ENCODE measurements at regions of chr6 and their contacts with region 1.

Region 1: DNA sequence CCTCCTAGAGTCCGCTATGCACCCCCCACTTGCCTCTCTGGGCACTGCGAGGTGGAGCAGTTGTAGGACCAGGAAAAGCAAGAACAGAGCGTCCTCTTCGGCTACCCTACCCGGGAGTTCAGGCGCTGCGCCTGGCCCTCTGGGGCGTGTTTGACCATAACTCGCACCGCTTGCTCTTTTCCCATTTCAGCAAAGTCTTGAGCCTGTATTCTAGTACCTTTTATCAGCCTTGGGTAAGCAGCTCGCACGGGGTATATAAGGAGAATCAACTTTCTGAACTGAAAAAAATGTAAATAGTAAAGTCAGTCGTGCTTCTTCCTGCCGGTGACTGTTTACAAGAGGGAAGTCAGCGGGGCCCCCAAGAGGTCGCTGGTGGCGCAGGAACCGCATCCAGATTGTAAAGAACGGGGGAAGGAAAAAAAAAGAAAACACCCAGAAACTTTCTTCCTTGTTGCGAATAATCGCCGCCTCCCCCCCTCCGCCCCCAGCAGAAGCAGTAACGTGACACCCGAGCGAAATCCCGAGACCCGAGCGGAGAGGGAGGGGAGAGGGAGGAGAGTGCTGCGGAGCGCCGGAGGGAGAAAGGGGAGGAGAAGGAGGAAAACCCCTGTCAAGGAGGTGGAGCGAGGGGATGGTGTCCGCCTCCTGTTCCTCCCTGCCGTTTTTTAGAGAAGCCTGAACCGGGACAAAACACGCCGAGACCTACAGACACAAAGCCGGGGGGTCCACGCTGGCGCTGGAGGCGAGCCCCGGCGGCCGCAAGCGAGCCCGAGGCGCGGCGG is at the start of gene UST:
- DNase-seq: peak; percentile 37
- H3K4me3 Mint-ChIP-seq: peak within 1 kb of the TSS; percentile 90
- H3K27ac Mint-ChIP-seq: peak within 1 kb of the TSS; percentile 46
- H3K4me1 Mint-ChIP-seq: peaks cover 13% of the 10 kb centered on the region
- H3K27me3 Mint-ChIP-seq: peaks cover 78% of the 10 kb centered on the region
- total RNA-seq, gene UST: 0.92 and 1.3 TPM in 2 replicates

Region 2: DNA sequence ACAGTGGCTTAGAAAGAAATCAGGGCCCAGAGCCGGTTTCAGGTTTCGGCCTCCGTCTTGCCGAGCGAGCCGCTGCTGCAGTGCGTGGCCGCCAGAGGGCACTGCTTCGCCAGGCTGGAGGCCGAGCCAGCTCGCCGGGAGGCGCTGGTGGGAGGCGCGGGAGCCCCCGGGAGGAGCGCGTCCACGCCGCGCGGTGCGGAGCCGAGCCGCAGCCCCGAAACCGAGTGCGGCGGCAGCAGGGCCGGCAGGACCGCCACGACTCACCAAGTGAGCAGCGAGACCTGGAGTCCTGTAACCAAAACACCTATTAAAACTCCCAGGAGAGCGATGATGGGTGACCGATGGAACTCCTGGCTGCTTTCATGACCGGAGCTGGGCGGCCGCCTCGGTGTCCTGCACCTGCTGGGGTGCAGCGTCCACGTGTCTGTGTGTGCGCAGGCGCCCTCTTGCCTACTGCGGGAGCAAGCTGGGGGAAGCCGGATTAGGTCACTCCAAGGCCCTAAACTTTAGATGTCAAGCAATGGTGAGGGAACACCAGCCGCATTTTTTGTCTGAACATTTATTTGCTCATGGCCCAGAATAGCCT is 186.6 kb before region 1 on chr6:
- intact Hi-C with region 1: loop called (anchors 10 kb)
- DNase-seq: peak; percentile 48
- H3K4me3 Mint-ChIP-seq: no peak overlapping the region
- H3K27ac Mint-ChIP-seq: no peak overlapping the region
- H3K4me1 Mint-ChIP-seq: peaks cover 8% of the 10 kb centered on the region
- H3K27me3 Mint-ChIP-seq: peaks cover 28% of the 10 kb centered on the region

Region 3: GRCh38 chr6:148770408-148771204 is 24.1 kb after region 1 on chr6:
- intact Hi-C with region 1: no loop called
- DNase-seq: no peak
- H3K4me3 Mint-ChIP-seq: no peak overlapping the region
- H3K27ac Mint-ChIP-seq: no peak overlapping the region
- H3K4me1 Mint-ChIP-seq: peaks cover 10% of the 10 kb centered on the region
- H3K27me3 Mint-ChIP-seq: peaks cover 53% of the 10 kb centered on the region

Region 4: GRCh38 chr6:148780918-148781436 is 34.4 kb after region 1 on chr6:
- intact Hi-C with region 1: loop called (anchors 5 kb)
- DNase-seq: no peak
- H3K4me3 Mint-ChIP-seq: no peak overlapping the region
- H3K27ac Mint-ChIP-seq: peak overlapping the region; percentile 14
- H3K4me1 Mint-ChIP-seq: peaks cover 10% of the 10 kb centered on the region
- H3K27me3 Mint-ChIP-seq: peaks cover 8% of the 10 kb centered on the region

Region 5: GRCh38 chr6:149012040-149012545 is 265.5 kb after region 1 on chr6:
- intact Hi-C with region 1: no loop called
- DNase-seq: no peak
- H3K4me3 Mint-ChIP-seq: no peak overlapping the region
- H3K27ac Mint-ChIP-seq: no peak overlapping the region
- H3K4me1 Mint-ChIP-seq: peaks cover 2% of the 10 kb centered on the region
- H3K27me3 Mint-ChIP-seq: peaks cover 18% of the 10 kb centered on the region

Region 6: GRCh38 chr6:149284904-149285303 is 538.4 kb after region 1 on chr6:
- intact Hi-C with region 1: no loop called
- DNase-seq: no peak
- H3K4me3 Mint-ChIP-seq: no peak overlapping the region
- H3K27ac Mint-ChIP-seq: peak overlapping the region; percentile 20
- H3K4me1 Mint-ChIP-seq: peaks cover 28% of the 10 kb centered on the region
- H3K27me3 Mint-ChIP-seq: no peaks in the 10 kb centered on the region

Measured in activated T-helper 2 cell treated with anti-CD3 and anti-CD28 coated beads, Interferon-gamma antibody, Interleukin-2, Interleukin-4, amounts not matched to agents 10 μg/mL and 5 μg/mL and 100 μg/mL, durations not matched to agents 14 hours and 24 hours and 36 hours (primary cell).